PC-3 (cell line): ENCODE measurements at regions of chr4 and their contacts with region 1.

Region 1: DNA sequence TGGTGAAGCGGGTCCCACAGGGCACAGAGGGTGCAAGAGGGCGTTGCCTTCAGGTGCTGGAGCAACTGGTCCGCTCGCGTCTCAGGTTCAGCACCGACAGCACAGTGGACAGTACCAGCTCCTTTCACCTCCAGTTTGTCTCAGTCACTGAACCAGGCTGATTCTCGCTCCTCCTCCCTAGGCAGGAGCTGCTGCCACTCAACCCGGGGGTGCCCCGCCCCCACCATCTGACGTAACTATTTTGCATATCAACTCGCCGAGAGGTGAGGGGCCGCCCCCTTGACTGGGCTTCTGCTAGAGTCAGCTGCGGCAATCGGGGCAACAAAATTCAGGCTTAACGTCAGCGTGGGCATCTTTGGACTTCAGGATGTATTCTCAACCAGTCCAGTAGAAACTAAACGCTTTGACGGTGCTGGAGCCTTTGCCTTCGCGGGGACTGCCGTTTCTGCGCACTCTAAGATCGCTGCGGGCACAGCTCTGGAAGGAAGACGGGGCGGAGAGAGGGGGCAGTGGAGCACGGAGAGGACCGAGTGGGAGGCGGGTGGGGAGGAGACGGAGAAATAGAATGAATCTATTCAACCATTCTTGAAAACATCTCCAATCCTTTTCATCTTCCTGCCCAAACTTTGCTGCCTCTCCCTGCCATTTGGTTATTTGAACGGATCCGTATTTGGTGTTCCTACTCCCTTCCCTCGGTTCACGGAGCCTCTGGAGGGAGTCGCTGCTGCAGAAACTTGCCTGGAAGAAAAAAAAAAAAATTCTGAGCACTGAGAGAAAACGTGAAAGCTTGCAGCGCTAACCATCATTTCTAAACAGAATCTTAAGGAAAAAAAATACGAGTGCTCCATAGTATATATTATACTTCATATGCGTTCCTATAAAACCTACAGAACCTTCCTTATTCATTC is at the start of gene FSTL5:
- DNase-seq: peak; percentile 53
- ATAC-seq: peak; percentile 86
- H3K4me3 ChIP-seq: peak within 1 kb of the TSS; percentile 63
- H3K27ac ChIP-seq: no peak within 1 kb of the TSS
- H3K4me1 ChIP-seq: 0 out of 2 replicates have a peak, but pooled peaks cover 6% of the 10 kb centered on the region
- H3K27me3 ChIP-seq: no peaks in the 10 kb centered on the region
- CTCF ChIP-seq: no peak
- total RNA-seq, gene FSTL5: not detected in 2 replicates

Region 2: DNA sequence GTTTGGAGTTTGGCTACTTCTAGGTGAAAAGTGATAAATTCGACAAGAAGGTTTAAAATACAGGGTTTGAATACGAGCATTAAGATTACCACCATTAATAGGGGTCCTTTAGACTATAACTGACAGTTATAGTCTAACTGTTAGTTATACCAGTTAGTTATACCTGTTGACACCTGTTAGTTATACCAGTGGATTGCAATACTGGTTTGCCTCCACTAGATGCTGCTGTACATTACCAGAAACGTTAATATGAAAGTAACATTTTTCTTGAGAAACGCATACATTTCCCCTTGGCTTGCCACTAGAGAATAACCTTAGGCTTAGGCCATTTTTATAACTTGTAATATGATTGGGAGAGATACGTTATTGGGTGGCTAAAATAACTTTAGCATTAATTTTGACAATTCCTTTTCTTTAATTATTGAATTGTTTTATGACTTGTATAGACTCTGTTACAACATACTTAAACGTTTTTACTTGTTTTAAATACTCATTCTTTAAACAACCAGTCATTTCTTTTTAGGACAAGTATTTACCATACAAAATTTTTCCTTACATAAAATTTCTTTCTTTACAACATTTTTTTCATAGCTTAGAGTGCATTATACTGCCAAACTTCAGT is 911.5 kb before region 1 on chr4:
- CTCF ChIA-PET with region 1: no interaction called
- POLR2A ChIA-PET with region 1: no interaction called
- intact Hi-C with region 1: loop called (anchors 10 kb)
- DNase-seq: peak; percentile 60
- ATAC-seq: peak; percentile 42
- H3K4me3 ChIP-seq: no peak overlapping the region
- H3K27ac ChIP-seq: no peak overlapping the region
- H3K4me1 ChIP-seq: no peaks in the 10 kb centered on the region; the same call in 1 of the 2 replicates
- H3K27me3 ChIP-seq: no peaks in the 10 kb centered on the region
- CTCF ChIP-seq: peak; percentile 80

Region 3: GRCh38 chr4:161320377-161320776 is 843.7 kb before region 1 on chr4:
- CTCF ChIA-PET with region 1: no interaction called
- POLR2A ChIA-PET with region 1: no interaction called
- intact Hi-C with region 1: loop called (anchors 5 kb)
- DNase-seq: peak; percentile 56
- ATAC-seq: peak; percentile 62
- H3K4me3 ChIP-seq: no peak overlapping the region
- H3K27ac ChIP-seq: no peak overlapping the region
- H3K4me1 ChIP-seq: no peaks in the 10 kb centered on the region
- H3K27me3 ChIP-seq: no peaks in the 10 kb centered on the region
- CTCF ChIP-seq: peak; percentile 67

Region 4: DNA sequence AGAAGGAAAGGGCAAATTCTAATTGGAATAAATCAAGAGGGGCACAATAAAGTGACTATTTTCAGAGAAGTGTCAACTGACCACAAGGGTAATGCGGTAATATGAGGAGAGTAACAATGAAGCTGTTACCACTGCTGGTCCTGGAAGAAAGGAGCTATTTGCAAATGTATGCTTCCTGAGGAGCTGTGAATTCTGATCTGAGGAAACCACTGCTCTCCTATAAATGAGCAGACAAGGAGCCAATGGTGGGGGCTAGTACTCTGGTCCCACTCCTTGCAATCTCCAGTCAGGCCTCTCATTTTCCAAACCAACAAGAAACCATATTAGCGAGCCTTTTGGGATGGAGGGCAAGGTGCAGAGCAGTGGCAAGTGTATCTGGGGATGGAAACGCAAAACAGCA is 770.5 kb before region 1 on chr4:
- CTCF ChIA-PET with region 1: interaction called, 10 read pairs
- POLR2A ChIA-PET with region 1: no interaction called
- intact Hi-C with region 1: no loop called
- DNase-seq: no peak
- ATAC-seq: no peak
- H3K4me3 ChIP-seq: no peak overlapping the region
- H3K27ac ChIP-seq: no peak overlapping the region
- H3K4me1 ChIP-seq: no peaks in the 10 kb centered on the region
- H3K27me3 ChIP-seq: no peaks in the 10 kb centered on the region
- CTCF ChIP-seq: no peak

Region 5: DNA sequence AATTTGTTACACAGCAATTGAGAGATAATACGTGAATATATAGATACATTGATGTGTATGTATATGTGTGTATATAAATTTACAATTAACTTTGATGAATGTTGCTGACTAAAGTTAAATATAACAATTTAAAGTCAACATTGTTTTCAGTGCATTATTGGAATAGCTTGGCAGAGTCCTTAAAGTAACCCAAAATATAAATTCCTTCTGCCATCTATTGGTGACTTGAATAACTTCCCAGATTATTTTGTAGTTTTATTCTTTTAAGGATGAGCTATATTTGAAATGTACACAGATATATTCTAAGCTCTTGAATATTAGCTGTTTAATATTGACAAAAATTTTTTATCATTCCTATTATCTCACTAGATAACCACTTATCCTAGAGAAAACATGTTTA is 297.8 kb after region 1 on chr4:
- CTCF ChIA-PET with region 1: no interaction called
- POLR2A ChIA-PET with region 1: no interaction called
- intact Hi-C with region 1: loop called (anchors 2 kb)
- DNase-seq: peak; percentile 25
- ATAC-seq: peak; percentile 66
- H3K4me3 ChIP-seq: no peak overlapping the region
- H3K27ac ChIP-seq: no peak overlapping the region
- H3K4me1 ChIP-seq: no peaks in the 10 kb centered on the region
- H3K27me3 ChIP-seq: no peaks in the 10 kb centered on the region
- CTCF ChIP-seq: peak; percentile 50